Activated B cell treated with CpG ODN at 0.5 μM for 24 hours (primary cell): ENCODE measurements at regions of chr19 and their contacts with region 1.

Region 1: DNA sequence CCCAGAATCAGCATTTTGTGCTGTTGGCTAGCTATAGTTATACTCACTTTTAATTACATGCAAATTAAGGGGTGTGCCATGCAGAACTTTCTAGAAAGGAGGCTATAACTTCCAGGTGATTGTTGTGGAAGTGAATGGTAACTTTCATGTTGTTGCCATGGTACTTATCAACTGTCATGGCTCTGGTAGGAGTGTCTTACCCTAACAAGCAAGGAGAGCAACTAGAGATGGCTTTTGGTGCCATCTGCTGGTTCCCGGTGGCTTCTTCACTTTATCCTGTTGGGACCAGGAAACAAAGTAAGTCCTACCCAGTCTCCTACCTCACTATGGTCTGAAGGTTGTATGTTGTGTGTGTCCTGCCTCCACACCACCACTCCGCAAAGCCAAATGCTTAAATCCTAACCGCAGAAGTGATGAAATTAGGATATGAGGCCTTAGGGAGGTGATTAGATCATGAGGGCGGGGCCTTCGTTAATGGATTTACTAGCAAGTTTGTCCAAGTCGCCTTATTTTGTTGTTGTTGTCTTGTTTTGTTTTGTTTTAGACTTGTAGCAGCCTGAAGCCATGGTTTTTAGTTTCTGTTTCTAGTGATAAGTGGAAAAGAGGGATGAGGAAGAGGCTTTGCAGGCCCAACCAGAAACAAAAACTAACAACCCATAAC is 22.6 kb downstream of the FBXL12 start:
- DNase-seq: peak; percentile 62
- ATAC-seq: peak; percentile 16
- H3K4me3 Mint-ChIP-seq: no peak overlapping the region
- H3K27ac Mint-ChIP-seq: peak overlapping the region; percentile 70
- H3K4me1 Mint-ChIP-seq: peaks cover 12% of the 10 kb centered on the region
- H3K27me3 Mint-ChIP-seq: no peaks in the 10 kb centered on the region
- CTCF ChIP-seq: no peak

Region 2: DNA sequence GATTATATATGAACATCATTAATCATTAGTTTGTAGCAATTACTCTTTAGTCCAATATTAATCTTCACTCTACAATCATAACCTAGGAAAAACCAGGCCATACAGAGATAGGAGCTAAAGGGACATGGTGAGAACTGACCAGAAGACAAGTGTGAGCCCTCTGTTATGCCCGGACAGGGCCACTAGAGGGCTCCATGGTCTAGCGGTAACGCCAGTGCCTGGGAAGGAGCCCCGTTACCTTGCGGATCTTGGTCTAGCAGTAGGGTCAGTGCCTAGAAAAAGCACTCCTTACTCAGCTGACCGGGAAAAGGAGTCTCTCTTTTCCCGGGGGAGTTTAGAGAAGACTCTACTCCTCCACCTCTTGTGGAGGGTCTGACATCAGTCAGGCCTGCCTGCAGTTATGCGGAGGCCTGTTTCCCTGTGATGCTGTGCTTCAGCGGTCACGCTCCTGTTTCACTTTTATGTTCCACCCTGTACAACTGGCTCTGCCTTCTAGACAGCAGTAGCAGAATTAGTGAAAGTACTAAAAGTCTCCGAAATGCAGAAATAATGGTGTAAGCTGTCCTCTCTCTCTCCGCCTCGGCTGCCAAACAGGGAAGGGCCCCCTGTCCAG is 590.6 kb before region 1 on chr19:
- CTCF ChIA-PET with region 1: interaction called, 14 read pairs
- POLR2A ChIA-PET with region 1: no interaction called
- intact Hi-C with region 1: no loop called
- DNase-seq: peak; percentile 54
- ATAC-seq: peak; percentile 66
- H3K4me3 Mint-ChIP-seq: peak overlapping the region; percentile 66
- H3K27ac Mint-ChIP-seq: no peak overlapping the region
- H3K4me1 Mint-ChIP-seq: peaks cover 7% of the 10 kb centered on the region
- H3K27me3 Mint-ChIP-seq: peaks cover 8% of the 10 kb centered on the region
- CTCF ChIP-seq: peak; percentile 72

Region 3: GRCh38 chr19:9435279-9436268 is 360.7 kb before region 1 on chr19 and contains the start of gene ZNF266:
- CTCF ChIA-PET with region 1: no interaction called
- POLR2A ChIA-PET with region 1: no interaction called
- intact Hi-C with region 1: loop called (anchors 5 kb)
- DNase-seq: peak; percentile 84
- ATAC-seq: peak; percentile 92
- H3K4me3 Mint-ChIP-seq: peak within 1 kb of the TSS; percentile 92
- H3K27ac Mint-ChIP-seq: peak within 1 kb of the TSS; percentile 97
- H3K4me1 Mint-ChIP-seq: peaks cover 38% of the 10 kb centered on the region
- H3K27me3 Mint-ChIP-seq: no peaks in the 10 kb centered on the region
- CTCF ChIP-seq: peak; percentile 28
- total RNA-seq, gene ZNF266: 43.7 and 50.3 TPM in 2 replicates

Region 4: DNA sequence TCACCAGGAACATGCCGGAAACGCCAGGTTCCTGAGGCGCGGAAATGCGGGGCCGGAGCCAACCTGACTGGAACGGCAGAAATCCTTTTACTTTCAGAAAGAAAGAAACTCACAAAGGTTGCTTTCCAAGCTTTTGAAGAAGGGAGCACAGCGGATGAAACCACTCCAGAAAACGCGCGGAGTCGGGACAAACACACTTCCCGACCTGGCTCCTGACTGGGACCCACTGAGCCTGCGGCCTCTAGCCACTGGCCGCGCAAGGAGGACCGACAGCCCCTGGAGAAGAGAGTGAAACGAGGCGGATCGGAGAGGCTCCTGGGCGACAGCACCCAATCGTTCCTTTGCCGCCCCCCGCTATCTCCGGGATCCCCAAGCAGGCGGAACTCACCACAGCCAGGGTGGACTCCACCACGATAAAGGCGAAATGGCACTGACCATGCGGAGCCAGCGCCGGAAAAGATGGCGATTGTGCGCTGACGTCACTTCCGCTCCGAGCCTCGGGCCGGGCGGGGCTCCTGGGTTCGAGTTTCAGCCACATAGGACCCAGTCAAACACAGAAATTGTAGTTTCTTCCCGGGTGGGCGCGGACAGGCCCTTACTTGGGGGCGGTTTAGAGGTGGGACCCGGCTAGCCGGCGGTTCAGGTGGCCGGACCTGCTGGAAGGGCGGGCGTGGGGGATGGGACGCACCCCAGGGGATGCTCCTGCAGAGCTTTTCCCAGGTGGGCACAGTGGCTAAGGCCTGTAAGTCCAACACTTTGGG is 212.0 kb before region 1 on chr19 and contains the start of gene ZNF121:
- CTCF ChIA-PET with region 1: interaction called, 5 read pairs
- POLR2A ChIA-PET with region 1: no interaction called
- intact Hi-C with region 1: loop called (anchors 1 kb)
- DNase-seq: peak; percentile 80
- ATAC-seq: peak; percentile 84
- H3K4me3 Mint-ChIP-seq: peak within 1 kb of the TSS; percentile 95
- H3K27ac Mint-ChIP-seq: peak within 1 kb of the TSS; percentile 94
- H3K4me1 Mint-ChIP-seq: peaks cover 46% of the 10 kb centered on the region
- H3K27me3 Mint-ChIP-seq: peaks cover 6% of the 10 kb centered on the region
- CTCF ChIP-seq: no peak
- total RNA-seq, gene ZNF121: 53.7 and 57.0 TPM in 2 replicates

Region 5: GRCh38 chr19:9674663-9675357 is 121.4 kb before region 1 on chr19 and contains the start of gene ZNF562:
- CTCF ChIA-PET with region 1: no interaction called
- POLR2A ChIA-PET with region 1: no interaction called
- intact Hi-C with region 1: loop called (anchors 2 kb)
- DNase-seq: peak; percentile 78
- ATAC-seq: peak; percentile 91
- H3K4me3 Mint-ChIP-seq: peak within 1 kb of the TSS; percentile 99
- H3K27ac Mint-ChIP-seq: peak within 1 kb of the TSS; percentile 98
- H3K4me1 Mint-ChIP-seq: peaks cover 29% of the 10 kb centered on the region
- H3K27me3 Mint-ChIP-seq: no peaks in the 10 kb centered on the region
- CTCF ChIP-seq: no peak
- total RNA-seq, gene ZNF562: 31.6 and 32.2 TPM in 2 replicates

Region 6: DNA sequence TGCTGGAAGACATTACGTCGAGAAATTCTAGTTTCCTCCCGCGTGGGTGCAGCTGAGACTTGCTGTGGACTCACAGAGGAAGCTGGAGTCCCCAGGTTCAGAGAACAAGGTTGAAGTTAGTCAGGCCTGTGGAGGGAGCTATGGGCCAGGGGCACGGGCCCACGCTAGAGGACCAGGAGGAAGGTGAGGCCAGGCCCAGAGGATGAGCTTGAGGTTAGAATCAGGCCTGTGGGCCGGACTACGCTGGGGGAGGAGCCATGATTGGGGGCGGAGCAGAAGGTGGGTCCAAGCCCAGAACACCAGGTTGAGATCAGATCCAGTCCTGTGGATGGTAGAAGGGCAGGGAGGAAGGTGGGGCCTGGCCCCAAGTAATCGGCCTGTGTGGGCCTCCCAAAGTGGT is 60.3 kb before region 1 on chr19:
- CTCF ChIA-PET with region 1: no interaction called
- POLR2A ChIA-PET with region 1: no interaction called
- intact Hi-C with region 1: no loop called
- DNase-seq: no peak
- ATAC-seq: no peak
- H3K4me3 Mint-ChIP-seq: no peak overlapping the region
- H3K27ac Mint-ChIP-seq: no peak overlapping the region
- H3K4me1 Mint-ChIP-seq: no peaks in the 10 kb centered on the region
- H3K27me3 Mint-ChIP-seq: no peaks in the 10 kb centered on the region
- CTCF ChIP-seq: no peak

Region 7: DNA sequence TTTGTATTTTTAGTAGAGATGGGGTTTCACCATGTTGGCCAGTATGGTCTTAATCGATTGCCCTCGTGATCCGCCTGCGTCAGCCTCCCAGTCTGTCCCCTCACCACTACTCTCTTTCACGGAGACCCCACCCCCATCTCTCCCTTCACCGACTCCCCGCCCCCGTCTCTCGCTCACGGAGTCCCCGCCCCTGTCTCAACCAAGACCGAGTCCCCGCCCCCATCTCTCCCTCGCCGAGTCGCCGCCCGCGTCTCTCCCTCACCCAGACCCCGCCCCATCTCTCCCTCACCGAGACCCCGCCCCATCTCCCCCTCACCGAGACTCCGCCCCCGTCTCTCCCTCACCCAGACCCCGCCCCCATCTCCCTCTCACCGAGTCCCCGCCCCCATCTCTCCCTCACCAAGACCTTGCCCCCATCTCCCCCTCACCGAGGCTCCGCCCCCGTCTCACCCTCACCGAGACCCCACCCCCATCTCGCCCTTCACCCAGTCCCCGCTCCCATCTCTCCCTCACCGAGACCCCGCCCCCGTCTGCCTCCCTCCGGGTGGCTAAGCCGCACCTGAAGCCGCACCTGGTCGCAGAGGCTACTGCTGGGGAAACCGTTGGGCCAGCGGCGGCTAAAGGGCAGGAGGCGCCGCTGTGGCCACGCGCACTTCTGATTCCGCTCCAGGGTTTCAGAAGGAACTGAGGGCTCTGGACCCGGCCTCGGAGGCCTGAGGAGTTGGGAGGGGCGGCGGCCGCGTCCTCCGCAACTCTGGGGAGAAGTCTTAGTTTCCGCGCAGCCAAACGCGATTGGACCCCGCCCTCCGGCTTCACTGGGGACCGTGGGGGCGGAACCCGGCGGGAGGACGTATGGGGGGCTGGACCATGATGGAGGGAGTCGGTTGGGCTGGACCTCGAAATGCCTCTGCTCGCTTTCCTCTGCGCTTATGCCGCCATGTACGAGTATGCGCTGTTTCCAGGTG is 10.6 kb before region 1 on chr19:
- CTCF ChIA-PET with region 1: no interaction called
- POLR2A ChIA-PET with region 1: no interaction called
- intact Hi-C with region 1: loop called (anchors 1 kb)
- DNase-seq: peak; percentile 86
- ATAC-seq: peak; percentile 84
- H3K4me3 Mint-ChIP-seq: peak overlapping the region; percentile 91
- H3K27ac Mint-ChIP-seq: peak overlapping the region; percentile 96
- H3K4me1 Mint-ChIP-seq: peaks cover 15% of the 10 kb centered on the region
- H3K27me3 Mint-ChIP-seq: no peaks in the 10 kb centered on the region
- CTCF ChIP-seq: no peak

Region 8: DNA sequence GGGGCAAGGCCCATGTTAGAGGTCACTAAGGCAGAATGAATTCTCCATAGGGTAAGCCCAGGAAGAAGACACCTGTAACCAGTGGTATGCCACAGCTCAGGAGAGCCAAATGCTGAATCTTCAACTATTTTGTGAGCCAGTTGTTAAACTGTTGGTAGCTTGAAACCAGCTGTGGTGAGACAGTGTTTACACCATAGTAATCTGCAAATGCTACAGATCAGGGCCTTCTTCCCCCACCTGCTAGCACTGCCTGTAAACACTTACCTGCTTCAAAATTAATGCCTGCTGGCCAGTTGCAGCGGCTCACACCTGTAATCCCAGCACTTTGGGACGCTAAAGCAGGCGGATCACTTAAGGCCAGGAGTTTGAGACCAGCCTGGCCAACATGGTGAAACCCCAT is 10.6 kb after region 1 on chr19:
- CTCF ChIA-PET with region 1: no interaction called
- POLR2A ChIA-PET with region 1: no interaction called
- intact Hi-C with region 1: no loop called
- DNase-seq: no peak
- ATAC-seq: no peak
- H3K4me3 Mint-ChIP-seq: no peak overlapping the region
- H3K27ac Mint-ChIP-seq: no peak overlapping the region
- H3K4me1 Mint-ChIP-seq: no peaks in the 10 kb centered on the region
- H3K27me3 Mint-ChIP-seq: no peaks in the 10 kb centered on the region
- CTCF ChIP-seq: no peak